H1 (cell line): ENCODE measurements at regions of chr18 and their contacts with region 1.

Region 1: GRCh38 chr18:32072321-32072720 is 19.4 kb upstream of the RNF138 start:
- DNase-seq: no peak
- H3K4me3 ChIP-seq: no peak overlapping the region
- H3K27ac ChIP-seq: no peak overlapping the region
- H3K4me1 ChIP-seq: no peaks in the 10 kb centered on the region
- H3K27me3 ChIP-seq: no peaks in the 10 kb centered on the region
- CTCF ChIP-seq: no peak; a peak in 1 of 4 replicates
- EP300 ChIP-seq: no peak
- POLR2A ChIP-seq: no peak
- RAD21 ChIP-seq: peak in 1 of 2 experiments; percentile 20; a peak in 1 of 4 replicates

Region 2: DNA sequence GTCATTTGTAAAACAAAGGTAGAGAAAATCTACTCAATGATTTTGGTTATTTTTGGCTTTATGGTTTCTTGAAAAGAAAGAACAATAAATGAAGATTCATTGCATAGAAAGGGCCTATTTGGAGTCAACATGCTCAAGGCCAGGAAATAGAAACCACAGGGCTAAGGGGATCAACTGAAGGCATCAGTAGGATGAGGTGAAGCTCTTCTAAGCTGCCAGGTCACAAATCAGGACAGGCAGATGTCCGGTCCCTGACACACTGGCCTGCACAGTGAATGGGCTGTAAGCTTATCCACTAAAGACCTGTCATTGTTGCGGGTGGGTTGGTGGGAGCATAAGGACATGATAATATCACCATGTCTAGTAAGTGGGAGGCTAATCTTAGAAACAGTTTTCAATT is 12.3 kb before region 1 on chr18:
- CTCF ChIA-PET with region 1: interaction called, 20 read pairs
- POLR2A ChIA-PET with region 1: no interaction called
- DNase-seq: no peak
- H3K4me3 ChIP-seq: no peak overlapping the region
- H3K27ac ChIP-seq: no peak overlapping the region
- H3K4me1 ChIP-seq: peaks cover 0 to 3% (median 1%) of the 10 kb centered on the region in 4 experiments; a peak in 1 of 7 replicates
- H3K27me3 ChIP-seq: no peaks in the 10 kb centered on the region
- CTCF ChIP-seq: no peak
- EP300 ChIP-seq: no peak
- POLR2A ChIP-seq: no peak
- RAD21 ChIP-seq: no peak

Region 3: GRCh38 chr18:32110005-32110404 is 37.7 kb after region 1 on chr18:
- CTCF ChIA-PET with region 1: no interaction called
- POLR2A ChIA-PET with region 1: no interaction called
- DNase-seq: no peak
- H3K4me3 ChIP-seq: no peak overlapping the region
- H3K27ac ChIP-seq: no peak overlapping the region
- H3K4me1 ChIP-seq: no peaks in the 10 kb centered on the region
- H3K27me3 ChIP-seq: no peaks in the 10 kb centered on the region
- CTCF ChIP-seq: no peak
- EP300 ChIP-seq: no peak
- POLR2A ChIP-seq: no peak
- RAD21 ChIP-seq: no peak